Ovary (tissue), 10 donors: ENCODE measurements at regions of chr1 and their contacts with region 1.

Region 1: DNA sequence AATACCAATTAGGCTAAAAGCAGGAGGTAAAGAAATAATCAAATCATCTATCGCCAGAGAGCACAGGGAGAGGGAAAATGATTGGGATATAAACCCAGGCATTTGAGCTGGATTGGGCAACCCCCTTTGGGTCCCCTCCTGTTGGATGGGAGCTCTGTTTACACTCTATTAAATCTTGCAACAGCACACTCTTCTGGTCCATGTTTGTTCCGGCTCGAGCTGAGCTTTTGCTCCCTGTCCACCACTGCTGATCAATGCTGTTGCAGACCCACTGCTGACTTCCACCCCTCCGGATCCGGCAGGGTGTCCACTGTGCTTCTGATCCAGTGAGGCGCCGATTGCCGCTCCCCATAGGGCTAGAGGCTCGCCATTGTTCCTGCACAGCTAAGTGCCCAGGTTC is 493.8 kb downstream of the MATN1 start:
- DNase-seq: no peak
- H3K4me3 ChIP-seq: no peak overlapping the region
- H3K27ac ChIP-seq: no peak overlapping the region
- H3K4me1 ChIP-seq: no peaks in the 10 kb centered on the region
- H3K27me3 ChIP-seq: no peaks in the 10 kb centered on the region
- CTCF ChIP-seq: no peak
- EP300 ChIP-seq: no peak
- POLR2A ChIP-seq: no peak

Region 2: GRCh38 chr1:30085811-30086770 is 143.5 kb before region 1 on chr1:
- intact Hi-C with region 1: no loop called
- DNase-seq: peak; percentile 26 to 69 (median 58)
- H3K4me3 ChIP-seq: no peak overlapping the region
- H3K27ac ChIP-seq: no peak overlapping the region
- H3K4me1 ChIP-seq: peaks cover 10% of the 10 kb centered on the region
- H3K27me3 ChIP-seq: no peaks in the 10 kb centered on the region
- CTCF ChIP-seq: peak in 2 of 3 donors; percentile 44 to 63
- EP300 ChIP-seq: no peak
- POLR2A ChIP-seq: no peak

Region 3: DNA sequence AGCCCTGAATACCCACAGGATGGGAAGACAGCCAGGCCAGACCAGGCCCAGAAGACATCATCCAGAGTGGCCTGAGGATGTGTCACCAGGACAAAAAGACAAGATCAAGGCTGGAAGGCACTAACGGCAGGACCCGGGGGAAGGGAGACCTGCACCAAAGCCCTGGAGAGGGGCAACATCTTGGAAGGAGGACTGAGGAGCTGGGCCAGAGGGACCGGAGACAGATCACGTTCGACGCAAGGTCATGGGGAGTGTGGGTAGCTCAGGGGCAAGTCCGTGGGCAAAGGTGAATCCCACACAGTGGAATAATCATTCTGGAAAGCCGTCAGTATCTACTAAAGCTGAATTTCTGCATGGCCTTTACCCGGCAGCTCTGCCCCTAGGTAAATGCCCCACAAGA is 15.2 kb after region 1 on chr1:
- intact Hi-C with region 1: loop called in 1 of 4 experiments (anchors 2 kb)
- DNase-seq: no peak
- H3K4me3 ChIP-seq: no peak overlapping the region
- H3K27ac ChIP-seq: no peak overlapping the region
- H3K4me1 ChIP-seq: no peaks in the 10 kb centered on the region
- H3K27me3 ChIP-seq: no peaks in the 10 kb centered on the region
- CTCF ChIP-seq: no peak
- EP300 ChIP-seq: no peak
- POLR2A ChIP-seq: no peak